ENCODE measurements at regions of chr20 and their contacts with region 1.

Region 1: DNA sequence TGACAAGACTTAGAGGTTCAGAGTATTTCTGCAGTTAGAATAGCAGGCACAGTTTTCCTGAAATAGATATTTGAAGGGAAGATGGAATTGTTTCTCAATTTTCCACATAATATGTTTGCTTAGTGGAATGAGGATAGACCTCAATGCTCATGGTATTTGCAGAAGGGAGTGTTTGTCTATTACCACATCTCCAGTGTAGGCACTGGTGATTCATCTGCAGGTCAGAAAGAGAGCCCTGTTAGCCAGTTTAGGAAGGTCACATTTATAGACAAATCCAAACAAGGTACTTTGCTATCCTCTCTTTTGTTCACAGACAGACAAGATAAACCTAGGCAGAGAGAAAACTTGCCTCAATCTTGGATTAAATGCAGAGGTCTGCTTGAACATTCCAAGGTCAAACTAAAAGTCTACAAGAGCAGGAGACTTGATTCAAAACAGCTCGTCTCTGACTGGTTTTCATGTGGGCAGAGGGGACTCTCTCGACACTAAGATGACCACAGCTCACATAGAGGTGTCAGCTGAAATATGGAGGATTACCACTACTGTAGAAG is 22.8 kb downstream of the ISM1 start:
- DNase-seq: no peak
- ATAC-seq: no peak
- H3K4me3 Mint-ChIP-seq: no peak overlapping the region
- H3K27ac Mint-ChIP-seq: no peak overlapping the region
- H3K4me1 Mint-ChIP-seq: peaks cover 36% of the 10 kb centered on the region
- H3K27me3 Mint-ChIP-seq: no peaks in the 10 kb centered on the region
- CTCF ChIP-seq: no peak

Region 2: DNA sequence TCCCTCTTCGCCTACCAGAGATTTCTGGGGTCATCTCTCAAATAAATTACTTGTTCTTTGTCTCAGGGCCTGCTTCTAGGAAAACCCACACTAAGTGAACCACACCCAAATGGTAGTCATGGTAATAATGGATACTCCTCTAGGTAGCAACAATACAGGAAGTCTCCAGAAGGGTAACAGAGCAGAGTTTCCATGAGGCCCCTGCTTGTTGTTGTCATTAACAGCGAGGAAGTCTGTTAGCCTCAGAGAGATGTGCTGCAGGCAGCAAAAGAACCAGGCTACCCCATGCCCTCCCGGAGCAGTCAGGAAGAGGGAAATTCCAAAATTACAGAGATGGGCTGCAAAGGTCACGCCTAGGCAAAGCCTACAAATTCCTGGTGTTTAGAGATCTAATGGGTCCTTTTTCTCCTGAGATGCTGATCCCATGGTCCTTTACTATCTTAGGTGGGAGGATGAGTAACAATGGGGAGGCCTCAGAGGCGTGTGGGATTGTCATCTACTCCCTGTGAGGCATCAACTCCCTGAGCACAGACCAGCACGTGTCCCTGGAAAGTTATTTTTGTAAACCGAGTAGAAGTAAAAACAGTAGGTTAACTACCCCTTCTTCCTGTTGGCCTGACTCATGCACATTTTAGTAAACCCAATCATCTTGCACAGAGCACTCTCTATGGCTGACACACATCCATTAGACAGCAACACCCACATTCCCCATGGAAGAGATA is 12.7 kb before region 1 on chr20:
- CTCF ChIA-PET with region 1: interaction called, 3 read pairs
- POLR2A ChIA-PET with region 1: interaction called, 7 read pairs
- intact Hi-C with region 1: loop called (anchors 1 kb)
- DNase-seq: peak; percentile 78
- ATAC-seq: peak; percentile 86
- H3K4me3 Mint-ChIP-seq: peak overlapping the region; percentile 19
- H3K27ac Mint-ChIP-seq: peak overlapping the region; percentile 91
- H3K4me1 Mint-ChIP-seq: peaks cover 41% of the 10 kb centered on the region
- H3K27me3 Mint-ChIP-seq: peaks cover 1% of the 10 kb centered on the region
- CTCF ChIP-seq: no peak

Region 3: GRCh38 chr20:13492001-13492481 is 248.1 kb after region 1 on chr20:
- CTCF ChIA-PET with region 1: no interaction called
- POLR2A ChIA-PET with region 1: no interaction called
- intact Hi-C with region 1: no loop called
- DNase-seq: no peak
- ATAC-seq: no peak
- H3K4me3 Mint-ChIP-seq: no peak overlapping the region
- H3K27ac Mint-ChIP-seq: no peak overlapping the region
- H3K4me1 Mint-ChIP-seq: no peaks in the 10 kb centered on the region
- H3K27me3 Mint-ChIP-seq: no peaks in the 10 kb centered on the region
- CTCF ChIP-seq: no peak